IMR-90 (cell line): ENCODE measurements at regions of chrX and their contacts with region 1.

Region 1: DNA sequence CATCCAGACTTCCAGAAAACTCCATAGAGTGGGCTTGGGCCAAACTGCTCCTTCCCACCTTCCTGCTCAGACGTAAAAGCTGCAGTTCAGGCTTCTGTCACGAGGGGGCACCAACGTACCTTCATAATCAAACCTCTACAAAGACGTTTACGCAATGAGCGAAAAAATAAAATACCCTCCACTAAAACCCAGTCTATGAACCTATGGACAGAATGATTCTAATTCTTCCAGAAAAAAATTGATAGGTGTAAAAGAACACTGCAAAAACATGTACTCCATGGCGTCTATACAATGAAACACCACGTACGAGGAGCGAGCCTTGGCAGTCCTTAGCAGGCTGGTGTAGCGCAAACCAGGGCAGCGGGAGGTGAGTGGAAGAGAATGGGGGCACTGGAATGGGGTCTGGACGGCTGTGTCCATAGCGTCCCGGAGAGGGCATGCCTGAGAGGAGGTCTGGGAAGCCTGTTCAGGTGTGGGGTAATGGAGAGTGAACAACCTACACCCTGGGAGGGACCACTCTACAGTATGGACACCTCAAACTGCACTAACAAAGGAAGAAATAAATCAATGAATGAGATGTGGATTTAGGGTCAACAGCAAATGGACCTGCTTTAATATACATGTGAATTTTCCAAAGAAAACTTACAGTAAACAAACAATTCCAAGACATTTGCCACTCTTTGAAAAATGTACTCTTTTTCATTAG is 14.4 kb upstream of the RAB40A start:
- DNase-seq: peak; percentile 65
- ATAC-seq: peak; percentile 67
- H3K4me3 ChIP-seq: no peak overlapping the region
- H3K27ac ChIP-seq: no peak overlapping the region
- H3K4me1 ChIP-seq: peaks cover 5% of the 10 kb centered on the region; the same call in 1 of the 2 replicates
- H3K27me3 ChIP-seq: peaks cover 2% of the 10 kb centered on the region; the same call in 1 of the 2 replicates
- CTCF ChIP-seq: peak; percentile 73
- POLR2A ChIP-seq: no peak
- RAD21 ChIP-seq: peak; percentile 79

Region 2: DNA sequence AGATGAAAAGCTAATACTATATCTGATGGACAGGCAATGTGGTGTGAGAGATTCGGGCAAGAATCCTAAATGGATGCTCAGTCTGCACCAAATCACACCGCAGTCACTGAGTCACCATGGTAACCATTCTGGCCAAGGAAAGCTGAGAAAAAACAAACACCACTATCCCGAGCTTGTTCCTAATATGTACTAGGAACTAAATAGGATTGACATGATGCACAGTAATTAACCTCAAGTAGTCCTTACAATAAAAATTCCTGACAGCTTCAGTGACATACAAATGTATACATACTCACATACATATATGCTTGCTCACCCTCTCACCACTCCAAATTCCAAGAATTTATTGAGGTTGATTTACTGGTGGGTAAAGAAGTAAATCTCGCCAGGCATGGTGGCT is 13.3 kb before region 1 on chrX:
- CTCF ChIA-PET with region 1: no interaction called
- POLR2A ChIA-PET with region 1: no interaction called
- dilution Hi-C with region 1: no loop called
- in situ Hi-C with region 1: no loop called
- intact Hi-C with region 1: no loop called
- DNase-seq: peak; percentile 71
- ATAC-seq: peak; percentile 70
- H3K4me3 ChIP-seq: no peak overlapping the region
- H3K27ac ChIP-seq: no peak overlapping the region
- H3K4me1 ChIP-seq: no peaks in the 10 kb centered on the region
- H3K27me3 ChIP-seq: peaks cover 3% of the 10 kb centered on the region; the same call in 1 of the 2 replicates
- CTCF ChIP-seq: no peak
- POLR2A ChIP-seq: no peak
- RAD21 ChIP-seq: no peak

Region 3: GRCh38 chrX:103674531-103675454 is 141.1 kb after region 1 on chrX:
- CTCF ChIA-PET with region 1: no interaction called
- POLR2A ChIA-PET with region 1: no interaction called
- dilution Hi-C with region 1: no loop called
- in situ Hi-C with region 1: loop called (anchors 10 kb)
- intact Hi-C with region 1: loop called (anchors 2 kb)
- DNase-seq: peak; percentile 3
- ATAC-seq: no peak; the same call in 1 of the 2 replicates
- H3K4me3 ChIP-seq: no peak overlapping the region
- H3K27ac ChIP-seq: no peak overlapping the region
- H3K4me1 ChIP-seq: no peaks in the 10 kb centered on the region
- H3K27me3 ChIP-seq: peaks cover 3% of the 10 kb centered on the region; the same call in 1 of the 2 replicates
- CTCF ChIP-seq: no peak
- POLR2A ChIP-seq: no peak; the same call in 1 of the 2 replicates
- RAD21 ChIP-seq: no peak

Region 4: DNA sequence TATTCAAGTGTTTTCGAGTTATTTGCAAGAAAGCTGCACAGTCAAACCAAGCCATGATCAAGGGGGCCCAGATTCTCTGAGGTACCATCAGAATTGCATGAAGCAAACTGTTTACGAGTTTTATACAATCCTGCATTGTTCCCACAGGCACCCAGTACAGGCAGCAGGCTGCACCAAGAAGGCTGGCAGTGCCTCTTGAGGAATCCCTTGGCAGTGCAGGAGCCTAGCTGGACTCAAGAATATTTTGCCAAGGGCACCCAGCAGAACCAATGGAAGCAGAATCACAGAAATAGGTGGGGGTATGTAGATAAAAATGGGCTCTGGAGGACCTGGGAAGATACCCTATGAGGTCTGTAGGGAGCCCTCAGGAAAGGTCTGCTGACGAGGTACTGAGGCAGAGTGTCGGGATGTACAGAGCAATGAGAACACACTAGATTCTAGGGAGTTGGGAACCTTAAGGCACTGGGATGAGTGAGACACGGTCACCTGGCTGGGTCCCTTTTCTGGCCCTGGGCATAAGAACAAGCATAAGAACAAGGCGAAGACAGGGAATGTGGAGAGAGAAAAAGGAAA is 240.5 kb after region 1 on chrX:
- CTCF ChIA-PET with region 1: no interaction called
- POLR2A ChIA-PET with region 1: no interaction called
- dilution Hi-C with region 1: no loop called
- in situ Hi-C with region 1: no loop called
- intact Hi-C with region 1: loop called (anchors 2 kb)
- DNase-seq: peak; percentile 52
- ATAC-seq: peak; percentile 90
- H3K4me3 ChIP-seq: no peak overlapping the region
- H3K27ac ChIP-seq: no peak overlapping the region
- H3K4me1 ChIP-seq: no peaks in the 10 kb centered on the region
- H3K27me3 ChIP-seq: peaks cover 32% of the 10 kb centered on the region
- CTCF ChIP-seq: peak; percentile 57
- POLR2A ChIP-seq: no peak
- RAD21 ChIP-seq: peak; percentile 64

Region 5: DNA sequence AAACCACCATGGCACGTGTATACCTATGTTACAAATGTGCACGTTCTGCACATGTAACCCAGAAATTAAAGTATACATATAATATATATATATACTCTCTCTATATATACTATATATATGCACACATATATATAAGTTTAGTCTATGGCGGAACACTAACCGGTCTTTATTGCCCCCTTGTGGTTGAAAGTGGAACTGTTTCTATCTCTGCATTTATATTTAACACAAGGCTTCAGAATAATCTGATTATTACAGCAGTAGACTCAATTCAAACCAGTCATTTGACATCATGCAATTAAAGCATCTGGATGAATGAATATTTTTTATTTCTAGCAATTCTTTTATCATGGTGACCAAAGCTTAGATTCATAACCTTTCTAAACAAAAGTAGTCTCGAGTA is 283.8 kb after region 1 on chrX:
- CTCF ChIA-PET with region 1: no interaction called
- POLR2A ChIA-PET with region 1: no interaction called
- dilution Hi-C with region 1: no loop called
- in situ Hi-C with region 1: loop called (anchors 5 kb)
- intact Hi-C with region 1: loop called (anchors 1 kb)
- DNase-seq: peak; percentile 42
- ATAC-seq: peak; percentile 79
- H3K4me3 ChIP-seq: no peak overlapping the region
- H3K27ac ChIP-seq: no peak overlapping the region
- H3K4me1 ChIP-seq: no peaks in the 10 kb centered on the region
- H3K27me3 ChIP-seq: peaks cover 1% of the 10 kb centered on the region; the same call in 1 of the 2 replicates
- CTCF ChIP-seq: peak; percentile 62
- POLR2A ChIP-seq: no peak
- RAD21 ChIP-seq: peak; percentile 61

Region 6: GRCh38 chrX:104136241-104137019 is 602.8 kb after region 1 on chrX:
- CTCF ChIA-PET with region 1: no interaction called
- POLR2A ChIA-PET with region 1: no interaction called
- dilution Hi-C with region 1: no loop called
- in situ Hi-C with region 1: loop called (anchors 25 kb)
- intact Hi-C with region 1: loop called (anchors 1 kb)
- DNase-seq: peak; percentile 91
- ATAC-seq: peak; percentile 96
- H3K4me3 ChIP-seq: peak overlapping the region; percentile 73
- H3K27ac ChIP-seq: peak overlapping the region; percentile 90
- H3K4me1 ChIP-seq: peaks cover 2% of the 10 kb centered on the region; the same call in 1 of the 2 replicates
- H3K27me3 ChIP-seq: peaks cover 2% of the 10 kb centered on the region; the same call in 1 of the 2 replicates
- CTCF ChIP-seq: peak; percentile 77
- POLR2A ChIP-seq: no peak
- RAD21 ChIP-seq: peak; percentile 78